Activated B cell treated with CpG ODN at 0.5 μM for 24 hours (primary cell): ENCODE measurements at regions of chr19 and their contacts with region 1.

Region 1: DNA sequence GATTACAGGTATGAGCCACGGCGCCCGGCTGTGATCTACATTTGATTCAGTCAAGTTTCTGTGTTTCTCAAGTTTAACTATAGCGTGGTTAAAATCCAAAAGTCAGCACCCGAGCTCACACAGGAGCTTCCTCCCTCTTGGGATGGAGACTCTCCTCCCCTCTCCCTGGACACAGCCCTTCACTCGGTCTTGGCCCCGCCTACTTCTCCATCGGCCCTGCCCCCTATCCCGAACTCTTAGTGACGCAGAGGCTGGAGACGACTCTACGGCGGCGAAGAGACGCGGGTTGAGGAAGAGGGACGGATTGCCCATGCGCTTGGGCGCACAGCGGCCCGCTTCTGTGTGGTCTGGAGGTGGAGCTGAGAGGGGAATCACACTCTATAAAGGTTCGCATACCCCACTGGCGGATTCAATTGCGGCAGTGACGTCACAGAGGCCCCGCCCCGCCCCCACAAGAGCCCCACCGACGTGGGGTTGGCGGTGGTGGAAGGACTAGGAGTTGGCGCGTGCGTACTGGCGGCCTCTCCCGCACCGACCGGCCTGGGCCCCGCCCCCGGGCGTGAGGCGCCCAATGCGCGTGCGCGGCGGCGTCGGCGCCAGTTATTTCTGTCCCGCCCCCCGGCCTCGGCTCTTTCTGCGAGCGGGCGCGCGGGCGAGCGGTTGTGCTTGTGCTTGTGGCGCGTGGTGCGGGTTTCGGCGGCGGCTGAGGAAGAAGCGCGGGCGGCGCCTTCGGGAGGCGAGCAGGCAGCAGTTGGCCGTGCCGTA is at the start of gene TRIM28:
- DNase-seq: peak; percentile 100
- ATAC-seq: peak; percentile 87
- H3K4me3 Mint-ChIP-seq: peak within 1 kb of the TSS; percentile 94
- H3K27ac Mint-ChIP-seq: peak within 1 kb of the TSS; percentile 98
- H3K4me1 Mint-ChIP-seq: peaks cover 27% of the 10 kb centered on the region
- H3K27me3 Mint-ChIP-seq: peaks cover 16% of the 10 kb centered on the region
- CTCF ChIP-seq: no peak
- total RNA-seq, gene TRIM28: 380 and 407 TPM in 2 replicates

Region 2: GRCh38 chr19:58466760-58467589 is 77.0 kb before region 1 on chr19 and contains the start of gene ZNF324:
- CTCF ChIA-PET with region 1: no interaction called
- POLR2A ChIA-PET with region 1: interaction called, 5 read pairs
- intact Hi-C with region 1: loop called (anchors 2 kb)
- DNase-seq: peak; percentile 95
- ATAC-seq: peak; percentile 92
- H3K4me3 Mint-ChIP-seq: peak within 1 kb of the TSS; percentile 81
- H3K27ac Mint-ChIP-seq: peak within 1 kb of the TSS; percentile 56
- H3K4me1 Mint-ChIP-seq: peaks cover 26% of the 10 kb centered on the region
- H3K27me3 Mint-ChIP-seq: no peaks in the 10 kb centered on the region
- CTCF ChIP-seq: no peak
- total RNA-seq, gene ZNF324: 11.8 and 13.1 TPM in 2 replicates

Region 3: DNA sequence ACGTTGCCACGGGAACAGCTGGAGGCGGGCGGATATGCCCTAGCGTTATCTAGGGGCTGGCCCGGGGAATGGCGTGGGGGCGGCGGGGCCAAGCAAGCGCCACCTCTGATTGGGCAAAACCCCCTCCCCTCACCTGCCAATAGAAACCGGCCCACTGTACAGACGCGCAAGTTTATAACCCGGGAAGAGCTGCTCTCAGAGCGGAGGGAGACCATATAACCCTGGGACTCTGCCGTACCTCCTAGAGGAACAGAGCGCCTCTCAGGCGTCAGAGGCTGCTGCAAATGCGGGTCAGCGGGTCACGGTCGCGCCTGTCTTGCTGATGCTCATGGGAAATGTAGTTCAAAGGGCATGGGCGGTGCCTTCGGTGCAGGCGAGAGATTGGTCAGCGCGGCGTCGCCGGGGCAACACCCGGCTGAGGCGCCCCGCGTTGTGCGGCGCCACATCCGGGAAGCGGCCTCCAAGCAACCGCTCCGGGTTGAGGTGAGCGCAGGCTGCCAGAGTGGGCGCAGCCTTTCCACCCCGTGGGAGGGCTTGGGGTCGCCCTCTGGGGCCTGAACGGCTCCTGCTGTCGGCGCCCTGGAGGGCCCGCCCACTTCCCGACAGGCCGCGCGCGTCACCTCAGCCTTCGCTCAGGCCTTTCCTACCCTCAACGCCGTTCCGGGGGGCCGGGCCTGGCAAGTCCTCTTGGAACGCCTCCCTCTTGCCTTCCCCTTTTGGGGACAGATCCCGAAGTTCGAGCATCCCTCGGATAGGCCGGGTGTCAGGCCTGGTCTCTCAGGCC is 68.1 kb before region 1 on chr19 and contains the start of gene ZNF446:
- CTCF ChIA-PET with region 1: no interaction called
- POLR2A ChIA-PET with region 1: no interaction called
- intact Hi-C with region 1: loop called (anchors 1 kb)
- DNase-seq: peak; percentile 91
- ATAC-seq: peak; percentile 88
- H3K4me3 Mint-ChIP-seq: peak within 1 kb of the TSS; percentile 94
- H3K27ac Mint-ChIP-seq: peak within 1 kb of the TSS; percentile 95
- H3K4me1 Mint-ChIP-seq: peaks cover 20% of the 10 kb centered on the region
- H3K27me3 Mint-ChIP-seq: no peaks in the 10 kb centered on the region
- CTCF ChIP-seq: no peak
- total RNA-seq, gene ZNF446: 9.6 and 10.4 TPM in 2 replicates

Region 4: DNA sequence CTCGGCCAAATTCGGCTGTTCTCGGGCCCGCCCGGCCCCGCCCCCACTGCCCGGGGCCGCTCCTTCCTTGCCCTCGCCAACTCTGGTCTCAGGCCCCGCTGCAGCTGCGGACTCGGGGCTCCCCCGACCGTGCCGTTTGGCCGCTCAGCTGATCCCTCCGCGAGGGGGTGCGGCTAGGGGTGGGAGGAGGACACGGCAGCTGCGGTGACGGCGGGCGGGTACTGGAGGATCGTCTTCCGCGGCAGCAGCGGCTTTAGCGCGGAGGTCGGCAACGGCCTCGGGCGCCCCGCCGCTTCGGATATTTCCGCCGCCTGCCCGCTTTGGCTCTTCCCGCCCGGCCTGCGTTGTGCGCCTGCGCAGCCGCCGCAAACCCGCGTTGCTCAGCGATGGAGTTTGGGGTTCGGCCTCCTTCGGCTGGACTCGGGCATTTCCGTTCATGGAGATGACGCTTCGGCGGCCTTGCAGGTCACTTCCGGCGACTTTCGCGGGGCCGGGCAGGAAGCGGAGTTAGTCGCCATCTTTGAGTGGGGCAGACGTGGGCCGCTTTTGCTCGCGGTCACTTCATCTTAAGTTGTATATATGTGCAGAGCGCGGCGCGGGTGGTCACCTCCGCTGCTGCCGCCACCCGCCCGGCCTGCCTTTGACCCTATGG is 14.7 kb after region 1 on chr19:
- CTCF ChIA-PET with region 1: no interaction called
- POLR2A ChIA-PET with region 1: interaction called, 78 read pairs
- intact Hi-C with region 1: loop called (anchors 1 kb)
- DNase-seq: peak; percentile 97
- ATAC-seq: peak; percentile 72
- H3K4me3 Mint-ChIP-seq: peak overlapping the region; percentile 97
- H3K27ac Mint-ChIP-seq: peak overlapping the region; percentile 97
- H3K4me1 Mint-ChIP-seq: peaks cover 82% of the 10 kb centered on the region
- H3K27me3 Mint-ChIP-seq: no peaks in the 10 kb centered on the region
- CTCF ChIP-seq: no peak

Region 5: DNA sequence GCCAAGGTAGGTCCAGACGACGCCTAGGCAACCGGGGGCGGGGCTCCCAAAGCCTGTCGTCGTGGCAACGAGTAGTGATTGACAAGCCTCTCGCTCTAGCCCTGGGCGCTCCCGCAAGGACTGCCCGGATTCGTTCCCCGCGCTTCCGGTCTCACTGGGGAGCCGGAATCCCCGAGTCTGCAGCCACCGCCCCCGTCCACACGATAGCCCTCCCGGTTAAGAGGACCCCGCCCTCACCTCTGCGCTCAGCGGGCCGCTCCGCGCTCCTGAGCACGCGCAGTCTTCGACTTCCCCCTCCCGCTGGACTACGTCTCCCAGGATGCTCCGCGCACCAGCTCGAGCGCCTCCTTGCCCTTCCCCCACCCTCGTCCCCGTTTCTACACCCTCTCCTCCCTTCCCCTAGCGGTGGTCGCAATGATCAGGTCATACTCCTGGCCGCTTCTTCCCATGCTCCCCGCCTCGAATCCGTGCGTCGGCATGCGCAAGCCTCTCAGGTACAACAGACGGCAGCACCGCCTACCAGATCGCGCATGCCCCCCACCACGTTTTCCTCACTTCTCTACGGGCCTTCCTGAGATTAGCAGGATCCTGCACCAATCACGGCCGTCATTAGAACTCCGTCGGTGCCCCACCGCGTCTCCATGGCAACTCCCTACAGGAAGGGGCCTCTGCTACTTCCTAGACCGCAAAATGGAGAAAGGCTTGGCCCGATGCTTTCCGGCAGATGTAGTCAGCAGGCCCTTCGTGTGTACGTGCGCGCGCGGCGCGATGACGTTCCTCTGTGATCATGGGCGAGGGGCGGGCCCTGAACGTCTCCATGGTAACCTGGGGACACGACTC is 29.0 kb after region 1 on chr19 and contains the start of gene MZF1:
- CTCF ChIA-PET with region 1: no interaction called
- POLR2A ChIA-PET with region 1: interaction called, 27 read pairs
- intact Hi-C with region 1: loop called (anchors 1 kb)
- DNase-seq: peak; percentile 100
- ATAC-seq: peak; percentile 61
- H3K4me3 Mint-ChIP-seq: peak within 1 kb of the TSS; percentile 97
- H3K27ac Mint-ChIP-seq: peak within 1 kb of the TSS; percentile 100
- H3K4me1 Mint-ChIP-seq: peaks cover 44% of the 10 kb centered on the region
- H3K27me3 Mint-ChIP-seq: no peaks in the 10 kb centered on the region
- CTCF ChIP-seq: no peak
- total RNA-seq, gene MZF1: 41.9 and 54.5 TPM in 2 replicates

Region 6: DNA sequence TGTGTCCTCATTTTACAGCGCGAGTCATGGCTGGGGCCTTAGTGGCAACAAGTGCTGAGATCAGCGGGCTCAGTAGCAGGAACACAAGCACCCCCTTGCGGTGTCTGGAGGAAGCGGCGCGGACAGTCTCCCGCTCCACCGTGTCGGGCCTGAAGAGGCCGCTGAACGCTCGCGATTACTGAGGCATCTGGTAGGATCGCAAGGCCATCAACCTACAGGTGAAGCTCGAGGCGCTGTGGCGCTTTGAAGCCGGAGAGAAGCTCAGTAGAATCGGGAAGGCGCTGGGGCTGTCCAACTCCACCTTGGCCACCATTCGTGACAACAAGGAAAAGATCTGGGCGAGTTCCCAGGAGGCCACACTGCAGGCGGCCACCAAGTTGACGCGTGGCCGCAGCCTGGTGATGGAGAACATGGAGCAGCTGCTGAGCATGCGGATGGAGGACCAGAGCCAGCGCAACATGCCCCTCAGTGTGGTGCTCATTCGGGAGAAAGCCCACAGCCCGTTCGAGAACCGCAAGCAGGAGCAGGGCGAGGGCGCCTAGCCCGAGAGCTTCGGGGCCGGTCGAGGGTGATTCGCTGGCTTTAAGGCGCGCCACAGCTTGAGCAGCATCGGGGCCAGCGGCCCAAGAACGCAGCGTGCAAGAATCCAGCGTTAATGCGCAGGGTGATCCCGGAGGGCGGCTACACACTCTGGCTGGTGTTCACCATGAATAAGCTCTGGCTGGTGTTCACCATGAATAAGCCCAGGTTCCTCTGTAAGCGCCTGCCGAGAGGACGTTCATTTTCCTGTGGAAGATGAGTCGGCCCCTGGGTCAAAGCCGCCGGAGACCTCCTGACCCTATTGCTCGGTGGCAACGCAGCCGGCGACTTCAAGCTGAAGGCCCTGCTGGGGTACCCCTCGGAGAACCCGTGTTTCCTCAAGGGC is 37.5 kb after region 1 on chr19:
- CTCF ChIA-PET with region 1: no interaction called
- POLR2A ChIA-PET with region 1: interaction called, 5 read pairs
- intact Hi-C with region 1: loop called (anchors 1 kb)
- DNase-seq: peak; percentile 73
- ATAC-seq: peak; percentile 99
- H3K4me3 Mint-ChIP-seq: no peak overlapping the region
- H3K27ac Mint-ChIP-seq: peak overlapping the region; percentile 41
- H3K4me1 Mint-ChIP-seq: peaks cover 23% of the 10 kb centered on the region
- H3K27me3 Mint-ChIP-seq: no peaks in the 10 kb centered on the region
- CTCF ChIP-seq: no peak